Spleen (tissue), 13 donors: ENCODE measurements at regions of chr9 and their contacts with region 1.

Region 1: DNA sequence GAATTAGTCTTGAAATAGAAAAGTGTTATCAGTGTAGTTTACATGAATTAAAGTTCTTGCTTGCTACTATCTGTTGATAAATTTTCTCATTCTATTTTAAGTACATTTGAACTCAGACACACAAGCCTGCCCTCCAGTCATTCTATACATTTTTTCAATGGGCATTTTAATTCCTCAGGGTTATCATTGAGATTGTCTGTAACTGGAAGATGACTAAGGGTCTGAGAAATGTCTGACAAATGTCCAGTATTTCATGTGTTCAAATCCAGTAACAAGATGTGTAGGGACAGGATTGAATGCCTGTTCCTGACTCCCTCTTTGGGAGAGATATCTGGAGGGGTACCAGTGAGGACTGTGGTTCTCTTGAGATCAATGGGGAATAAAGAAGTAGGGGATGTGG is 223.9 kb upstream of the ADAMTSL1 start:
- DNase-seq: no peak
- H3K4me3 ChIP-seq: no peak overlapping the region
- H3K27ac ChIP-seq: no peak overlapping the region
- H3K4me1 ChIP-seq: peaks cover 0 to 3% (median 0%) of the 10 kb centered on the region in 6 donors
- H3K27me3 ChIP-seq: peaks cover 0 to 3% (median 0%) of the 10 kb centered on the region in 7 donors
- CTCF ChIP-seq: no peak
- POLR2A ChIP-seq: no peak

Region 2: GRCh38 chr9:19018201-19018600 is 768.1 kb after region 1 on chr9:
- intact Hi-C with region 1: loop called (anchors 5 kb)
- DNase-seq: no peak
- H3K4me3 ChIP-seq: no peak overlapping the region
- H3K27ac ChIP-seq: no peak overlapping the region
- H3K4me1 ChIP-seq: no peaks in the 10 kb centered on the region
- H3K27me3 ChIP-seq: no peaks in the 10 kb centered on the region
- CTCF ChIP-seq: no peak
- POLR2A ChIP-seq: no peak